ENCODE measurements at regions of chr10 and their contacts with region 1.

Region 1: GRCh38 chr10:74728225-74728624 is 98.2 kb upstream of the KAT6B start:
- DNase-seq: no peak
- ATAC-seq: no peak
- H3K4me3 Mint-ChIP-seq: no peak overlapping the region
- H3K27ac Mint-ChIP-seq: no peak overlapping the region
- H3K4me1 Mint-ChIP-seq: no peaks in the 10 kb centered on the region
- H3K27me3 Mint-ChIP-seq: no peaks in the 10 kb centered on the region

Region 2: DNA sequence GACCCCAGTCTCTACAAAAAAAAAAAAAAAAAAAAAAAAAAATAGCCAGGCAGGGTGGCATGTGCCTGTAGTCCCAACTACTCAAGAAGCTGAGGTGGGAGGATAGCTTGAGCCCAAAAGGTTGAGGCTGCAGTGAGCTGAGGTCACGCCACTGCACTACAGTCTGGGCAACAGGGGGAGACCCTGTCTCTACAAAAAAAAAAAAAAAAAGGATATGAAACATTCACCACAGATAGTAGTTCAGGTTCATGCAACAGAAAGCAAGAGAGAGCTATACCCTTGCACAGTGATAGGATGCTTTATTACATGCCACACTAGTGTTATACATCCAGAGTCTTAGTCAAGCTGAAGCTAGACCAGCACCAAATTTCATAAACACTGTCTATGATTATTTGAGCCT is 50.3 kb before region 1 on chr10:
- CTCF ChIA-PET with region 1: no interaction called
- POLR2A ChIA-PET with region 1: no interaction called
- intact Hi-C with region 1: no loop called
- DNase-seq: no peak
- ATAC-seq: peak; percentile 39
- H3K4me3 Mint-ChIP-seq: no peak overlapping the region
- H3K27ac Mint-ChIP-seq: no peak overlapping the region
- H3K4me1 Mint-ChIP-seq: peaks cover 17% of the 10 kb centered on the region
- H3K27me3 Mint-ChIP-seq: no peaks in the 10 kb centered on the region

Region 3: GRCh38 chr10:74746813-74747212 is 18.6 kb after region 1 on chr10:
- CTCF ChIA-PET with region 1: no interaction called
- POLR2A ChIA-PET with region 1: no interaction called
- intact Hi-C with region 1: loop called in 1 of 2 experiments (anchors 1 kb)
- DNase-seq: no peak
- ATAC-seq: no peak
- H3K4me3 Mint-ChIP-seq: no peak overlapping the region
- H3K27ac Mint-ChIP-seq: no peak overlapping the region
- H3K4me1 Mint-ChIP-seq: no peaks in the 10 kb centered on the region
- H3K27me3 Mint-ChIP-seq: no peaks in the 10 kb centered on the region

Measured in activated CD4-positive, alpha-beta T cell treated with anti-CD3 and anti-CD28 coated beads for 36 hours (primary cell).